Activated T-helper 1 cell treated with anti-CD3 and anti-CD28 coated beads, Interleukin-12 subunit alpha, Interleukin-12 subunit beta, Interleukin-2, Interleukin-4 antibody, amounts not matched to agents 30 ng/mL and 10 ng/mL and 1 ng/mL, durations not matched to agents 14 hours and 24 hours and 36 hours (primary cell): ENCODE measurements at regions of chr17 and their contacts with region 1.

Region 1: GRCh38 chr17:51153210-51154072 is at the start of gene NME1:
- DNase-seq: peak; percentile 96
- H3K4me3 Mint-ChIP-seq: no peak within 1 kb of the TSS
- H3K27ac Mint-ChIP-seq: no peak within 1 kb of the TSS
- H3K4me1 Mint-ChIP-seq: peaks cover 21% of the 10 kb centered on the region
- H3K27me3 Mint-ChIP-seq: no peaks in the 10 kb centered on the region
- total RNA-seq, gene NME1: 413 and 424 TPM in 2 replicates

Region 2: GRCh38 chr17:50707289-50708049 is 446.0 kb before region 1 on chr17 and contains the start of gene ANKRD40:
- intact Hi-C with region 1: loop called (anchors 10 kb)
- DNase-seq: peak; percentile 90
- H3K4me3 Mint-ChIP-seq: peak within 1 kb of the TSS; percentile 95
- H3K27ac Mint-ChIP-seq: peak within 1 kb of the TSS; percentile 97
- H3K4me1 Mint-ChIP-seq: peaks cover 40% of the 10 kb centered on the region
- H3K27me3 Mint-ChIP-seq: peaks cover 3% of the 10 kb centered on the region
- total RNA-seq, gene ANKRD40: 47.0 and 50.3 TPM in 2 replicates

Region 3: DNA sequence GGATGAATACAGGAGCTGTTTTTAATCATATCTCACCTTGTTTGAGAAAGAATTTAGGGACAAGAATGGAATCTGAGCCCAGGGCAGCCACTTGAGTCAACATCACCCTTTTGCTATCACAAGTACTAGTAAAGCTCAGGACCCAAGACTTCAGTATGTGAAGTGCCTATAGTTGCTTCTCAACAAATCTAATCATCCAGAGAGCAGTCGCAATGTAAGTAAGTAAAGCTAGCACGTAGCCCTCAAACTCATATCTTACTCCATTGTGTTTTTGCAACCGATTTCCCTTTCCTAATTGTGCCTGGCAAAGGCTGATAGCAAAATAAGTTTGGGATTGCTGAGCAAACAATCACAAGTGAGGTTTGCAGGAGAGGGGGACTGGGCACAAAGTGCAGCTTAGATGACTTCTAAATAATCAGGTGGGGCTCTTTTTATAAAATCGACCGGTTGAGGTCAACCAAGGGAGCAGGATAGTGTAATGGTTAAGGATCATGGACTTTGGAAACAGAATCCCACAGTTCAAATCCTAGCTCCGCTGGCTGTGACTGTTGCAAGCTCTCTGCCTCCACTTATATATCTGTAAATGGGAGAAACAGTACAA is 300.3 kb before region 1 on chr17:
- intact Hi-C with region 1: loop called (anchors 5 kb)
- DNase-seq: no peak
- H3K4me3 Mint-ChIP-seq: no peak overlapping the region
- H3K27ac Mint-ChIP-seq: peak overlapping the region; percentile 85
- H3K4me1 Mint-ChIP-seq: peaks cover 27% of the 10 kb centered on the region
- H3K27me3 Mint-ChIP-seq: peaks cover 20% of the 10 kb centered on the region

Region 4: DNA sequence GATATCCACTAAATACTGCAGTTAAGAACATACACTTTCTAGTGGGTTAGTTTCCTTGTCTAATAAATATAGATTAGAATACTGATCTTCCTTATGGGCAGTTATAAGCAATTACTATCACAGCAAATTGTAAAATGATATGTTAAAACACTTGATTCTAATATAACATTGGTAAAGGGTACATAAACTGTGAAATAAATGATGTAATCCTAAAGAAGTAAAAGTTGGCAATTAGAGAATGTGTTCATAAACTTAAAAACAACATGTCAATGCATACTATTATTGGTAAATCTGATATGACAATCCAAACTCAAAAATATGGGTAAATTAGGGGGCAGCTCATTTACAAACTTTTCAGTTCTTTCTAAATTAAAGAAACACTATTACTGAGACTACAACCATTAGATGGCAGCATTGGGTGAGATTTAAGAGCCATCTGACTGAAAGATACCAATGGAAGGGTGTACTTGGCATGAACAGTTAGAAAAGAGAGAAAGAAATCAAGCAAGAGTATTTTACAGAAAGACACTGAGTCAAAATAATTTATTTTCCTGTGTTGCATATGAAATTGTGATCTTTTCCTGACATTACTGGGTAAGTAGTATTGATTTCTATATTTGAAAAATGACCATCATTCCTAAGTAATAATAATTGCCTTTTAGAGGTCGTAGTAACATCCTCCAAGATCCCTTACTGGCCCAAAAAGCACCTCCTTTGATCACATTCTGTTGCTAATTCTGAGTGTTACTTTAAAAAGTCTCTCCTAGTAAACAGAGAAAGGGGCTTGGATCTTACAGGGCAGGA is 152.4 kb before region 1 on chr17:
- intact Hi-C with region 1: loop called (anchors 1 kb)
- DNase-seq: no peak
- H3K4me3 Mint-ChIP-seq: no peak overlapping the region
- H3K27ac Mint-ChIP-seq: no peak overlapping the region
- H3K4me1 Mint-ChIP-seq: peaks cover 7% of the 10 kb centered on the region
- H3K27me3 Mint-ChIP-seq: no peaks in the 10 kb centered on the region

Region 5: DNA sequence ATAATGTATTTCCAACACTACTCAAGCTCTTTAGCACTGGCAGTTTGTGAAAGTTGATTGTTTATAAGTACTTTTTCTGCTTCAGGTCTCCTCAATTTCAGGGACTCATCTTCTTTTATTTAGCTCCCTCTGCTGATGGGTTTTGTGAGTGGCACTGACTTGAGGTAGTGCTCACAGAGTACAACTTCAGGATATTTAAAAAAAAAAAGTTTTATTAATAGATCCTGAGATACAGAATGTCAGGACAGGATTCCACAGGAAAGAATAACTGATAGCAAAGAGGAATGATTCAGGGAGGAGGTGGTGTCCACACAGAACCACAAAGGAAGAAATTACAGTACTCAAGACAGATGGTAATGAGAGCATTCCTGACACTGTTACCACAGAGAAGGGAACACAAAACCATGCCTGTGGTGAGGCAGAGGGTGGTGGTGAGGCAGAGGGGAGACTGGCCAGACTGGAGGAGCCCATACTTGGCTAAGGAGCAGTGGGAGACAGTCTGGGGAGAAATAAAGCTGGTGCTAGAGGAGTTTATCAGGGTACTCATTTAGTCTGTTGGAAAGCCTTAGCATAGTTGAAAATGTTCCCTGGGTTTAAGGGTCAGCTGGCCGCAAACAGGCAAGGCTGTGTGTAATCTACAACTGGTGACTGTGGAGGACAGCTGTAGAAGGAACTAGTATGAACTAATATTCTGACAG is 96.5 kb before region 1 on chr17:
- intact Hi-C with region 1: loop called (anchors 1 kb)
- DNase-seq: no peak
- H3K4me3 Mint-ChIP-seq: no peak overlapping the region
- H3K27ac Mint-ChIP-seq: no peak overlapping the region
- H3K4me1 Mint-ChIP-seq: peaks cover 7% of the 10 kb centered on the region
- H3K27me3 Mint-ChIP-seq: no peaks in the 10 kb centered on the region

Region 6: DNA sequence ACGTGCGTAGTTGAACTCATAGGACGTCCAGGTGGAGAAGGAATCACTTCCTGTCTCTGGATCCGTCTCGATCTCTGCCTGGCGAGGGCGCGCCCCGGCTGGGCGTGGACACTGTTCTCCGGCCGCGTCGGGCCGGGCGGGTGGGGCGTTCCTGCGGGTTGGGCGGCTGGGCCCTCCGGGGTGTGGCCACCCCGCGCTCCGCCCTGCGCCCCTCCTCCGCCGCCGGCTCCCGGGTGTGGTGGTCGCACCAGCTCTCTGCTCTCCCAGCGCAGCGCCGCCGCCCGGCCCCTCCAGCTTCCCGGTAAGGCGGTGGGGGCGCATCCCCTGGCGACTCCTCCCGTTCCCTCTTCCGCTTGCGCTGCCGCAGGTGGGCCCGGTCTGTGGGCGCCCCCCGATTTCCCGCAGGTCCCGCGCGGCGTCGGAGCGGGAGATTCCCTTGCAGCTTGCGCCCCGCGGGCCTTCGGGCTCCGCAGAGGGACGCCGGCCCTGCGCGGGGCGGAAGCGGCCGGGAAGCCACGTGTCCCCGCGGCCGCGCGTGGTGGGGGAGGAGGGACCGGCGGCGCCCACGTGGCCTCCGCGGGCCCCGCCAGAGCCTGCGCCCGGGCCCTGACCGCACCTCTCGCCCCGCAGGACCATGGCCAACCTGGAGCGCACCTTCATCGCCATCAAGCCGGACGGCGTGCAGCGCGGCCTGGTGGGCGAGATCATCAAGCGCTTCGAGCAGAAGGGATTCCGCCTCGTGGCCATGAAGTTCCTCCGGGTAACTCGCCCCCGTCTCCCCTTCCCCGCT is 13.0 kb after region 1 on chr17 and contains the start of gene NME2:
- intact Hi-C with region 1: loop called (anchors 1 kb)
- DNase-seq: peak; percentile 69
- H3K4me3 Mint-ChIP-seq: peak within 1 kb of the TSS; percentile 98
- H3K27ac Mint-ChIP-seq: peak within 1 kb of the TSS; percentile 98
- H3K4me1 Mint-ChIP-seq: peaks cover 32% of the 10 kb centered on the region
- H3K27me3 Mint-ChIP-seq: peaks cover 1% of the 10 kb centered on the region
- total RNA-seq, gene NME2: 664 and 674 TPM in 2 replicates

Region 7: DNA sequence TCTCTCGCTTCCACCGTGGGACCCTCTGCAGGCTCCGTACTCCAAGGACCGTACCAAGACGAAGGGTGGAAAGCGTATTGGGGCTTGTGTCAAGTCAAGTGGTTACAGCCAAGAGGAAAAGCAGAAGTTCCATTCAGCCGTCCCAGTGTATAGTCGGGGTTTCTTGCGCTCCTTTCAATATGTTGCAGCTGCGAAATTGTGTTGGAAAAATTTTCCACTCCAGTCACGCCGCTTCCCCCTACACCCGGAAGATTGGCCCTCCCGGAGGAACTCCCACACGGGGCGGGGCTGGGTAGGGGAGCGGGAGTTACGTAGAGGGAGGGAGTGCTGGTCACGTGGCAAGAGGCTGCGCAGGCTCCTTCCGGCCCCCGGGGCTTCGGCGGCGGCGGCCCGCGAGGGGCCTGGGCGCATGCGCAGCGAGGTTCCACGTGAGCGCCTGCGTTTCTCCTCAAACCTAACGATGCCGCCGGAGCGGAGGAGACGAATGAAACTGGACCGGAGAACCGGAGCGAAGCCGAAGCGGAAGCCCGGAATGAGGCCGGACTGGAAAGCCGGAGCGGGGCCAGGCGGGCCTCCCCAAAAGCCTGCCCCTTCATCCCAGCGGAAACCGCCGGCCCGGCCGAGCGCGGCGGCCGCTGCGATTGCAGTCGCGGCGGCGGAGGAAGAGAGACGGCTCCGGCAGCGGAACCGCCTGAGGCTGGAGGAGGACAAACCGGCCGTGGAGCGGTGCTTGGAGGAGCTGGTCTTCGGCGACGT is 106.9 kb after region 1 on chr17 and contains the start of gene UTP18:
- intact Hi-C with region 1: loop called (anchors 1 kb)
- DNase-seq: peak; percentile 93
- H3K4me3 Mint-ChIP-seq: peak within 1 kb of the TSS; percentile 88
- H3K27ac Mint-ChIP-seq: peak within 1 kb of the TSS; percentile 97
- H3K4me1 Mint-ChIP-seq: peaks cover 60% of the 10 kb centered on the region
- H3K27me3 Mint-ChIP-seq: no peaks in the 10 kb centered on the region
- total RNA-seq, gene UTP18: 89.7 and 95.6 TPM in 2 replicates

Region 8: GRCh38 chr17:51289696-51290111 is 136.3 kb after region 1 on chr17:
- intact Hi-C with region 1: no loop called
- DNase-seq: no peak
- H3K4me3 Mint-ChIP-seq: no peak overlapping the region
- H3K27ac Mint-ChIP-seq: no peak overlapping the region
- H3K4me1 Mint-ChIP-seq: no peaks in the 10 kb centered on the region
- H3K27me3 Mint-ChIP-seq: no peaks in the 10 kb centered on the region